IMR-90 (cell line): ENCODE measurements at regions of chr7 and their contacts with region 1.

Region 1: GRCh38 chr7:148819697-148820360 is 64.3 kb downstream of the EZH2 start:
- DNase-seq: peak; percentile 72
- ATAC-seq: peak; percentile 64
- H3K4me3 ChIP-seq: no peak overlapping the region
- H3K27ac ChIP-seq: no peak overlapping the region
- H3K4me1 ChIP-seq: peaks cover 4% of the 10 kb centered on the region
- H3K27me3 ChIP-seq: no peaks in the 10 kb centered on the region
- CTCF ChIP-seq: no peak
- POLR2A ChIP-seq: no peak
- RAD21 ChIP-seq: no peak

Region 2: DNA sequence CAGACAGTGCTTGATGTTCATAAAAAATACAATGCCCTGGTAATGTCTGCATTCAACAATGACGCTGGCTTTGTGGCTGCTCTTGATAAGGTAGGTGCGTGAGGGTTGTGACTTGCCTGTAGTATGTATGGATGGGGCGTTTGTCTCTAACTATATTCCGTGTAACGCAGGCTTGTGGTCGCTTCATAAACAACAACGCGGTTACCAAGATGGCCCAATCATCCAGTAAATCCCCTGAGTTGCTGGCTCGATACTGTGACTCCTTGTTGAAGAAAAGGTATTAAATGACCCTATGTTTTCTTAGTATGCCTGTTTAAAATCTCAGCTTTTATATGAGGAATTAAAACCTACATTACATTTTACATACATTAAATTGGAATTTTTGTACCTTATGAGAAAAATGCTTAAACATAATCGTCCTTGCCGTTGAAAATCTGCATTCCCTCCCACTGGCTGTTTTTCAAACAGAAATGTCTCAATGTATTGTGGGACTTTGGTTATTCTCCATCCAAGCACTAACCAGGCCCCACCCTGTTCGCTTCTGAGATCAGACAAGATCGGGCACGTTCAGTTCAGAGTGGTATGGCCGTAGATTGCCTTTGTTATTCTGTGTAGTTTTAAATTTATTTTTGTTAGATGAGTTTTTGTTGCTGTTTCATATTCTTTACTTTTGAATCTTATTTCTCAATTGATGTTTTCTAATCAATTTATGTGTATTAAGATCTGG is 35.9 kb before region 1 on chr7:
- CTCF ChIA-PET with region 1: no interaction called
- POLR2A ChIA-PET with region 1: no interaction called
- dilution Hi-C with region 1: no loop called
- in situ Hi-C with region 1: no loop called
- intact Hi-C with region 1: loop called (anchors 2 kb)
- DNase-seq: no peak
- ATAC-seq: no peak
- H3K4me3 ChIP-seq: no peak overlapping the region
- H3K27ac ChIP-seq: no peak overlapping the region
- H3K4me1 ChIP-seq: no peaks in the 10 kb centered on the region
- H3K27me3 ChIP-seq: no peaks in the 10 kb centered on the region
- CTCF ChIP-seq: no peak
- POLR2A ChIP-seq: no peak
- RAD21 ChIP-seq: no peak

Region 3: DNA sequence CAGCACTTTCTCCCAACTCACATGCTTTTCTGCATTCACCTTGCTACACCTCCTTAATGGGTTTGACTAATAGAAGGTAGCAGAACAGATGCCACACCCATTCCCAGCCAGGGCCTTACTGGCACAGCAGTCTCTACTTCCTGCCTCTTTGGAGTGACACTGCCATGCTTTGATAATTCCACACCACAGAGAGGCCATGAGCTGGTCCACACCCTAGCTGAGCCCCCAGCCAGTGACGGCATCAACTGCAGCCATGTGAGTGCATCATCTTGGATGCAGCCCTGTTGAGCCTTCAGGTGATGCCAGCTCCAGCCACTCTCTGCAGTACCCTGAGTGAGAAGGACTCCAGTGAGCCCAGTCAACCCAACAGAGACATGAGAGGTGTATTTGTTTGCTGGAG is 91.8 kb after region 1 on chr7:
- CTCF ChIA-PET with region 1: no interaction called
- POLR2A ChIA-PET with region 1: no interaction called
- dilution Hi-C with region 1: no loop called
- in situ Hi-C with region 1: no loop called
- intact Hi-C with region 1: no loop called
- DNase-seq: no peak
- ATAC-seq: no peak
- H3K4me3 ChIP-seq: no peak overlapping the region
- H3K27ac ChIP-seq: no peak overlapping the region
- H3K4me1 ChIP-seq: peaks cover 8% of the 10 kb centered on the region
- H3K27me3 ChIP-seq: peaks cover 47% of the 10 kb centered on the region
- CTCF ChIP-seq: no peak
- POLR2A ChIP-seq: no peak
- RAD21 ChIP-seq: no peak

Region 4: DNA sequence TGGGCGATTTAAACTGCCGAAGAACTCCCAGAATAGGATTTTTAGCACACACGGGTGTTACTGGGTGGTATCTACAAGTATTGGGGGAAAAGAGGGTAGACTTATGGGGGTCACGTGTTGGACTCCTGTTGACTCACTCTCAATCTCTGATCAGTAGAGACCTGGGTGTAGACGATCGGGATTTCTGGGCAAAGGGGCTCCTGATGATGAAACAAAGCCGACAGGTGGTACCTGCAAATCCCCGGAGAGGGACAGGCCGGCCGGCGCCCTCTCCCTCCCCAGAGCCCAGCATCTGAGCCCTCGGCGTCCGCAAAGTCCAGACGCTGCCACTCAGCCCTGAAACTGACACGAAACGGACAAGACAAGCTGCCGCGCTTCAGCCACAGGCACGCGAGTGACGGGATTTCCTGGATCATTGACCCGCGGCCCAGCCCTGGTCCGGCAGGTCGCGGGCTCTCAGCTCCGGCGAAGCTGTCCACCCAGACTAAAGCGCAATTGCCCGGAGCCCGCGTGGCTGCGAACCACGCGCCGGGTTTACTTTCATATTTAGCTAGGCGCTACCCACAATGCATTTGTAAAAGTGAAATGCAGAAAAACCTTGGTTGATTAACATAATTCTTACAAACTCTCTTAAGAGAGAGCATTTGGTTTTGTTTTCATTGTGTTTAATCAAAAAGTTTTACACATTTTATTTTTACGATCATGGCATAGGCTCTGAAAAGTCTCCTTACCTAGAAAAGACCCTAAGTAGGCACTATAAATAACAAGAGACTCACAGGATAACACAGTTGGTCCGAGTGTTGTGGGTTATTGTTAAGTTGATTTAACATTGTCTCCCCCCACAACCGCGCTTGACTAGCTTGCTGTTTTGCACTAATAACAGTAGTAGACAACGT is 121.1 kb after region 1 on chr7:
- CTCF ChIA-PET with region 1: no interaction called
- POLR2A ChIA-PET with region 1: no interaction called
- dilution Hi-C with region 1: no loop called
- in situ Hi-C with region 1: no loop called
- intact Hi-C with region 1: loop called (anchors 5 kb)
- DNase-seq: peak; percentile 91
- ATAC-seq: peak; percentile 92
- H3K4me3 ChIP-seq: peak overlapping the region; percentile 80
- H3K27ac ChIP-seq: peak overlapping the region; percentile 70
- H3K4me1 ChIP-seq: no peaks in the 10 kb centered on the region
- H3K27me3 ChIP-seq: no peaks in the 10 kb centered on the region
- CTCF ChIP-seq: no peak
- POLR2A ChIP-seq: no peak
- RAD21 ChIP-seq: no peak

Region 5: DNA sequence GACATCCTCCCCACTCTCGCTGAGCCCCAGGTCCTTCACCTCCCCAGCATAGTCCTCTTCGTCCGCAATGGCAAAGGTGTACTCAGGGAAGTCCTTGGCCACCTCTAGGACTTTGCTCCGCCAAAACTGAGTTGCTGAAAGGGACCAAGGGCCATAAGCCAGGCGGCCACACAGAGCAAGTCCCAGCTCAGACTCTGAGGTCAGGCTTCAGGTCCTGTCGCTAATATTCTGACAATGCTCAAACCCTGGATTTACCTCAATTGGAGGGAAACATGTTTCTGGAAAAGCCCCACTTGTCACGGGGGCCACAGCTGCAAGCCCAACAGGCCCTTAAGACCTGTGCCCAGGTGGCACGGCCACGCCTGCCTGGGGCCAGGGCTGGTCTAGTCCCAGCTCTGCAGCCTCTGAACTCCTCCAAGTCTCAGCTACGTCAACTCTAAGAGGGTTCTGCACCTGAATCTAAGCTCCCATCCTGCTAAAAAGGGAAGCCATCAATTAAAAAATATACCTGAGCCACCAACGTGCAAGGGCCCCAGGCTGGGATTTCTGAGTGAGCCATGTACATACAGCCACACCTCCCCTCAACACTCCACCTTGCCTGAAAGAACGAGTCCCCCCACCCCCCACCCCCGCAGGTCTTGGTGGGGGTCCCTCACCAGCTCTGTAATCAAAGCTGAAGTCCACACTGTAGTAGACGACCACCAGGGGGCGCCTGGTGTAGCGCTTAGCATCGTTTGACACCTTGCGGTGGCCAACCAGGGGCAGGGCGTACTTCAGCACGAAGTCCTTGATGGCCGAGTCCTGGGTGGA is 185.6 kb after region 1 on chr7:
- CTCF ChIA-PET with region 1: no interaction called
- POLR2A ChIA-PET with region 1: no interaction called
- dilution Hi-C with region 1: no loop called
- in situ Hi-C with region 1: no loop called
- intact Hi-C with region 1: no loop called
- DNase-seq: peak; percentile 55
- ATAC-seq: peak; percentile 91
- H3K4me3 ChIP-seq: no peak overlapping the region
- H3K27ac ChIP-seq: no peak overlapping the region
- H3K4me1 ChIP-seq: no peaks in the 10 kb centered on the region
- H3K27me3 ChIP-seq: no peaks in the 10 kb centered on the region
- CTCF ChIP-seq: peak; percentile 67
- POLR2A ChIP-seq: no peak
- RAD21 ChIP-seq: peak; percentile 60

Region 6: GRCh38 chr7:149036676-149037075 is 216.8 kb after region 1 on chr7:
- CTCF ChIA-PET with region 1: no interaction called
- POLR2A ChIA-PET with region 1: no interaction called
- dilution Hi-C with region 1: no loop called
- in situ Hi-C with region 1: no loop called
- intact Hi-C with region 1: no loop called
- DNase-seq: no peak
- ATAC-seq: no peak
- H3K4me3 ChIP-seq: no peak overlapping the region
- H3K27ac ChIP-seq: no peak overlapping the region
- H3K4me1 ChIP-seq: no peaks in the 10 kb centered on the region
- H3K27me3 ChIP-seq: no peaks in the 10 kb centered on the region
- CTCF ChIP-seq: no peak
- POLR2A ChIP-seq: no peak
- RAD21 ChIP-seq: no peak